ENCODE measurements at regions of chr15 and their contacts with region 1.

Region 1: GRCh38 chr15:47673232-47674080 is 43.8 kb upstream of the SEMA6D start:
- DNase-seq: no peak

Region 2: DNA sequence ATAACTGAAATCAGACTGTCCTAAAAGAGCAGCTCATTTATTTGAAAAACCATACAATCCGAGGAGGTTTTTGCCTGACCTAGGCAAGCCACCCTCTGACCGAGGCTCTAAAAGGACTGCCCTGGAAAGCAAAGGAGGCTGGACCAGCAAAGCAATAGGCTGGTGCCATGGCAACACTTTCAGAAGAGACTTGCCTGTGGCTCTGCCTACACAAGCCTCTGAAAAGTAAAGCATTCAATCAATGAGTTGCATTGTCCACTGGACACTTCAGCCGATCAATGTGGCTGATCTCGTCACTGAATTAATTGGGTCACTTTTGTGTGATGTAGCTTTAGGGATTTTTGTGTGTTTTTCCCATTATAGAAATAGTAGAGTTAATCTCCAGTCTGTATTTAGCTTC is 55.2 kb before region 1 on chr15:
- intact Hi-C with region 1: loop called in 1 of 2 experiments (anchors 10 kb)
- DNase-seq: no peak

Region 3: DNA sequence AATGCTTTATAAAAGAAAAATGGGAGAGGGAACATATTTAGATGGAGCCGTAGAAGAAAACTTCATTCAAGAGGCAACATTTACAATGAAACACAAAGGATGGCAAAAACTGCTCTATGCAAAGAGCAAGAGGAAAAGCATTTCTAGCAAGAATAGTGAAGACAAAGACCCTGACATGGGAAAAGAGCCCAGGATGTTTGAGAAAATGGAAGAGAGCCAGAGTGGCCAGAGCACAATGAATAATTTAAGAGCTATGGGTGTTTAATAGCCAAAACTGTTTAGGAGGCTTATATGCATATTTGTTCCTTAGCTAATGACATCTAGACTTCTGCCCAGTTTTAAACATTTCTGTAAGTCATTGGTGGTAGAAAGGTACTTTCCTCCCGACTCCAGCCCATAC is 18.4 kb after region 1 on chr15:
- intact Hi-C with region 1: no loop called
- DNase-seq: no peak

Region 4: GRCh38 chr15:47711654-47712053 is 38.2 kb after region 1 on chr15:
- intact Hi-C with region 1: no loop called
- DNase-seq: no peak

Measured in posterior vena cava (tissue), 2 donors.